ENCODE measurements at regions of chrX and their contacts with region 1.

Region 1: DNA sequence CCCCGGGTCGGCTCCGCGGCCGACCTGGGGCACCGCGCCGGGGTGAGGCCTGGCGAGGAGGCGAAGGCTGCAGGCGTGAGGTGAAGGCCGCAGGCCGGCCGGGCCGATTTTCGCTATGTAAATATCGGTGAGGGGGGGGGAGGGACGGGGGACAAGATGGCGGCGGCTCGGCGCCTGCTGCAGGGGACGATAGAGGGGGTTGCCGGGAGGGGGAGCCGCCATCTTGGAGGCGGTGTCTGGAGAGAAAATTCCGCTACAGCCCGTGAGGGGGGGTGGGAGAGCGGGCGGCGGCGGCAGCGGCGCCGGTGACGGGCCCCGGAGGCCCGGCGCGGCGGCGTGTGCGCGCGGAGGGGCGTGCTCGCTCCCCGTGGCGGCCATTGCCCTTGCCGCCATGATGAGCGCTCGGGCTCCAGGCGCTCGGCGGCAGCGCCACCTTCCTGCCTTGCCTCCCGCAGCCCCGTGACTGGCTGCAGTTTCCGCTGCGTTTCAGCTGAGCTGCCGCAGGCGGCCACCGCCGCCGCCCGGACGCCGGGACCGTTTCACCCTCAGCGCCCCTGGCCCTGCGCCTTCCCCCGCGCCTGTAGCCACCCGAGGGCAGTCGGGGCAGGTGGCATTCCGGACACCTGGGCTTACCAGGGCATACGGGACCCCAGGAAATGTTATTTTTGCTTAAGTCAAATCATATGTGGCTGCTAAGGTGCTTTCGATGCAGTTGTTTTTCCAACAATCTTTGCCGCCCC is 692 bp downstream of the ZFX start:
- DNase-seq: peak; percentile 61 to 93 (median 83)
- ATAC-seq: peak; percentile 72
- H3K4me3 ChIP-seq: peak overlapping the region; percentile 66 to 75
- H3K4me3 Mint-ChIP-seq: peak overlapping the region; percentile 83
- H3K27ac ChIP-seq: peak overlapping the region; percentile 88
- H3K27ac Mint-ChIP-seq: peak overlapping the region; percentile 93
- H3K4me1 ChIP-seq: peaks cover 32% of the 10 kb centered on the region
- H3K4me1 Mint-ChIP-seq: peaks cover 59% of the 10 kb centered on the region
- H3K27me3 ChIP-seq: no peaks in the 10 kb centered on the region
- H3K27me3 Mint-ChIP-seq: no peaks in the 10 kb centered on the region
- CTCF ChIP-seq: peak; percentile 15

Region 2: GRCh38 chrX:23667239-23668177 is 482.7 kb before region 1 on chrX and contains the start of gene PRDX4:
- CTCF ChIA-PET with region 1: no interaction called
- POLR2A ChIA-PET with region 1: interaction called, 3 read pairs
- intact Hi-C with region 1: loop called (anchors 5 kb)
- DNase-seq: peak; percentile 37 to 84 (median 64)
- ATAC-seq: peak; percentile 85
- H3K4me3 ChIP-seq: peak within 1 kb of the TSS; percentile 62 to 67
- H3K4me3 Mint-ChIP-seq: peak within 1 kb of the TSS; percentile 92
- H3K27ac ChIP-seq: peak within 1 kb of the TSS; percentile 66 to 68
- H3K27ac Mint-ChIP-seq: peak within 1 kb of the TSS; percentile 86
- H3K4me1 ChIP-seq: peaks cover 11% of the 10 kb centered on the region
- H3K4me1 Mint-ChIP-seq: peaks cover 25% of the 10 kb centered on the region
- H3K27me3 ChIP-seq: no peaks in the 10 kb centered on the region
- H3K27me3 Mint-ChIP-seq: no peaks in the 10 kb centered on the region
- CTCF ChIP-seq: no peak
- total RNA-seq, gene PRDX4: 2.2 to 3.6 TPM

Region 3: GRCh38 chrX:24024819-24025740 is 125.1 kb before region 1 on chrX:
- CTCF ChIA-PET with region 1: no interaction called
- POLR2A ChIA-PET with region 1: no interaction called
- intact Hi-C with region 1: loop called in 1 of 2 experiments (anchors 1 kb)
- DNase-seq: peak; percentile 62 to 89 (median 75)
- ATAC-seq: peak; percentile 90
- H3K4me3 ChIP-seq: peak overlapping the region; percentile 67 to 82
- H3K4me3 Mint-ChIP-seq: peak overlapping the region; percentile 87
- H3K27ac ChIP-seq: peak overlapping the region; percentile 85 to 87
- H3K27ac Mint-ChIP-seq: peak overlapping the region; percentile 64
- H3K4me1 ChIP-seq: peaks cover 13% of the 10 kb centered on the region
- H3K4me1 Mint-ChIP-seq: peaks cover 24% of the 10 kb centered on the region
- H3K27me3 ChIP-seq: no peaks in the 10 kb centered on the region
- H3K27me3 Mint-ChIP-seq: no peaks in the 10 kb centered on the region
- CTCF ChIP-seq: no peak

Region 4: GRCh38 chrX:24081661-24082264 is 68.5 kb before region 1 on chrX:
- CTCF ChIA-PET with region 1: no interaction called
- POLR2A ChIA-PET with region 1: interaction called, 5 read pairs
- intact Hi-C with region 1: loop called (anchors 2 to 5 kb)
- DNase-seq: peak; percentile 4 to 72 (median 43)
- ATAC-seq: peak; percentile 81
- H3K4me3 ChIP-seq: peak overlapping the region in 1 of 2 experiments; percentile 22
- H3K4me3 Mint-ChIP-seq: peak overlapping the region; percentile 26
- H3K27ac ChIP-seq: no peak overlapping the region
- H3K27ac Mint-ChIP-seq: no peak overlapping the region
- H3K4me1 ChIP-seq: no peaks in the 10 kb centered on the region
- H3K4me1 Mint-ChIP-seq: no peaks in the 10 kb centered on the region
- H3K27me3 ChIP-seq: no peaks in the 10 kb centered on the region
- H3K27me3 Mint-ChIP-seq: no peaks in the 10 kb centered on the region
- CTCF ChIP-seq: peak; percentile 33

Region 5: DNA sequence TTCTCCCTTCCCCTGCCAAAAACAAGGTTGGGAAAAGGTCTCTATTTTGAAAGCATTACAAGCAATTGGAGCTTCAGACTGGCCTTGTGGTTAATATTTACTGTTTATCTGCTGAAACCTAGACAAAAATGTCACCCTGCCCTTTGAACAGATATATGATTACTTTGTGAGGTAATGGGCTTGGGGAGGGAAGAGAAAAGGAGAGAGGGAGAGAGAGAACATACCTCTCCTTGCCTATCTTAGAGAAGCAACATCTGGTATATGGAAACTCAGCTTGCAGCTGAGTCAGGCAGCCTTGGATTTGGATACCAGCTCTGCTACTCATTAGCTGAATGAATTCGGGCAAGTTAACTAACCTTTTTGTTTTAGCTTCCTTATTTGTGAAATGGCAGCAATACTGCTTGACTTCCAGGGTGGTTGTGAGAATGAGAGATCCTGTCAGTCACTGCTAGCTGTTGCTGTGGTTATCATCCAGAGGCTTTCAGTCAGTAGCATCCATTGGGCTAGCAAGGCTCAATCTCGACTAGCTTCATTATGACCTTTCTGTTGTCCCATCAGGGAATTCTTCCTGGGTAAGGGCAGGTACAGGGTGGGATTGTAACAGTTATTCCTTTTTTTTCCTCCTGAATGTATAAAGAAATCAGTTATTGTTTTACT is 40.4 kb after region 1 on chrX:
- CTCF ChIA-PET with region 1: no interaction called
- POLR2A ChIA-PET with region 1: interaction called, 3 read pairs
- intact Hi-C with region 1: loop called in 1 of 2 experiments (anchors 5 kb)
- DNase-seq: no peak
- ATAC-seq: no peak
- H3K4me3 ChIP-seq: no peak overlapping the region
- H3K4me3 Mint-ChIP-seq: no peak overlapping the region
- H3K27ac ChIP-seq: no peak overlapping the region
- H3K27ac Mint-ChIP-seq: peak overlapping the region; percentile 41
- H3K4me1 ChIP-seq: peaks cover 4% of the 10 kb centered on the region
- H3K4me1 Mint-ChIP-seq: peaks cover 63% of the 10 kb centered on the region
- H3K27me3 ChIP-seq: no peaks in the 10 kb centered on the region
- H3K27me3 Mint-ChIP-seq: no peaks in the 10 kb centered on the region
- CTCF ChIP-seq: no peak

Region 6: GRCh38 chrX:24207826-24208225 is 57.6 kb after region 1 on chrX:
- CTCF ChIA-PET with region 1: no interaction called
- POLR2A ChIA-PET with region 1: no interaction called
- intact Hi-C with region 1: loop called in 1 of 2 experiments (anchors 1 kb)
- DNase-seq: no peak
- ATAC-seq: no peak
- H3K4me3 ChIP-seq: no peak overlapping the region
- H3K4me3 Mint-ChIP-seq: no peak overlapping the region
- H3K27ac ChIP-seq: no peak overlapping the region
- H3K27ac Mint-ChIP-seq: no peak overlapping the region
- H3K4me1 ChIP-seq: no peaks in the 10 kb centered on the region
- H3K4me1 Mint-ChIP-seq: peaks cover 22% of the 10 kb centered on the region
- H3K27me3 ChIP-seq: no peaks in the 10 kb centered on the region
- H3K27me3 Mint-ChIP-seq: no peaks in the 10 kb centered on the region
- CTCF ChIP-seq: no peak

Region 7: DNA sequence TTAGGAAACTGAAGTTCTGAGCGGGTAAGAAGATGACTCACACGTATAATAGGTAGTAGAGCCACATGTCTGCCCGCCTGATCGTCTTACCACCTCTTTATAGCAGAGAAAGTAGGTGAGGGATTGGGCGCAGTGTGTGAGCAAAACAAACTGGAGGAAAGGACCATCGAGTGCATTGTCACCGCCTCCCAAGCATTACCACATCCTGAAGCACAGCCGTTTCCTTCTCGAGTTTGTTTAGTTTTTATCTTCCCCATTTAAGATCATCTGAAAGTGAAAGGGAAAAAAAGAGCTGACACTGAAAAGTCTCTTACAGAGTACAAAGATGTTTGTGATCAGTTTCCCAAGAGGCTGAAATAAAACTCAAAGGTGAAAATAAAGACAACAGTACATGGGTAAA is 329.7 kb after region 1 on chrX:
- CTCF ChIA-PET with region 1: no interaction called
- POLR2A ChIA-PET with region 1: no interaction called
- intact Hi-C with region 1: loop called in 1 of 2 experiments (anchors 5 kb)
- DNase-seq: peak; percentile 47 to 94 (median 73)
- ATAC-seq: peak; percentile 94
- H3K4me3 ChIP-seq: peak overlapping the region; percentile 38 to 55
- H3K4me3 Mint-ChIP-seq: peak overlapping the region; percentile 80
- H3K27ac ChIP-seq: peak overlapping the region; percentile 78 to 95
- H3K27ac Mint-ChIP-seq: peak overlapping the region; percentile 97
- H3K4me1 ChIP-seq: peaks cover 62% of the 10 kb centered on the region
- H3K4me1 Mint-ChIP-seq: peaks cover 75% of the 10 kb centered on the region
- H3K27me3 ChIP-seq: no peaks in the 10 kb centered on the region
- H3K27me3 Mint-ChIP-seq: no peaks in the 10 kb centered on the region
- CTCF ChIP-seq: no peak